ENCODE measurements at regions of chr9 and their contacts with region 1.

Region 1: GRCh38 chr9:6353851-6354686 is 25.9 kb downstream of the TPD52L3 start:
- DNase-seq: no peak
- H3K4me3 ChIP-seq: no peak overlapping the region
- H3K27ac ChIP-seq: no peak overlapping the region
- H3K4me1 ChIP-seq: peaks cover 0 to 4% (median 0%) of the 10 kb centered on the region in 4 donors
- H3K27me3 ChIP-seq: no peaks in the 10 kb centered on the region
- CTCF ChIP-seq: peak; percentile 60 to 69 (median 63)
- EP300 ChIP-seq: no peak
- POLR2A ChIP-seq: no peak

Region 2: GRCh38 chr9:6522263-6522662 is 168.2 kb after region 1 on chr9:
- intact Hi-C with region 1: no loop called
- DNase-seq: no peak
- H3K4me3 ChIP-seq: no peak overlapping the region
- H3K27ac ChIP-seq: no peak overlapping the region
- H3K4me1 ChIP-seq: no peaks in the 10 kb centered on the region
- H3K27me3 ChIP-seq: no peaks in the 10 kb centered on the region
- CTCF ChIP-seq: no peak
- EP300 ChIP-seq: no peak
- POLR2A ChIP-seq: no peak

Region 3: DNA sequence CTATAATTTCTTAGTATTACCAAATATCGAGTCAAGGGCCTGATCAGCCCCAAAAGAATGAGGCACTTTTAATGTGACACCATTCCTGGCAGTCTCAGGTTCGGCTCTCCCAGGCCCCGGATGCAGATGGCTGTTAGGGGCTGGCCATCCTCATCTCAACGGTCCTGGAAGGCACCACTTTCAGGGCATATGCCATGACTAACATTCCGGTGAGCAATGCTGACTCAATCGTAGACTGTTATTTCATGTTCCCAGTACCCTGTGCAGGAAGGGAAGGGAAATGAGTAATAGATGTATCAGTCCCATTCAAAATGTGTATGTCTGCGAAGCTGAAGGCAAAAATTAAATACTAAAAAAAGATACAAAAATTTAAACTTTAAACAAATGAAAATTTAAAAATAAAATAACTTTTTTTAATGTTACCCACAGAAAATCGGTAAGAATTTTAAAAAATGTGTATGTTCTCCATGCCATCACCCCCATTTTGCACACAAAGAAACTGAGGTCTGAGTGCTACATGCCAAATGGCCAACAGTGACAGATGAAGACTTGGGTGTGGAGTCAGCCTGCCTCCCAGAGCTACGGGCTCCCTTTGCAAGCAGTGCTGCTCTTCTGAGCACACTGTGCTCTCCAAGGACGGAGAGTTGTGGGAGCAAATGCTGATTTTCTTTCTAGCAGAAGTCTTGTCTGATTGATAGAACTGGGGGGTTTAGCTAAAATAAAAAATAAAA is 212.5 kb after region 1 on chr9:
- intact Hi-C with region 1: loop called (anchors 2 kb)
- DNase-seq: no peak
- H3K4me3 ChIP-seq: no peak overlapping the region
- H3K27ac ChIP-seq: no peak overlapping the region
- H3K4me1 ChIP-seq: no peaks in the 10 kb centered on the region
- H3K27me3 ChIP-seq: no peaks in the 10 kb centered on the region
- CTCF ChIP-seq: no peak
- EP300 ChIP-seq: no peak
- POLR2A ChIP-seq: no peak

Region 4: DNA sequence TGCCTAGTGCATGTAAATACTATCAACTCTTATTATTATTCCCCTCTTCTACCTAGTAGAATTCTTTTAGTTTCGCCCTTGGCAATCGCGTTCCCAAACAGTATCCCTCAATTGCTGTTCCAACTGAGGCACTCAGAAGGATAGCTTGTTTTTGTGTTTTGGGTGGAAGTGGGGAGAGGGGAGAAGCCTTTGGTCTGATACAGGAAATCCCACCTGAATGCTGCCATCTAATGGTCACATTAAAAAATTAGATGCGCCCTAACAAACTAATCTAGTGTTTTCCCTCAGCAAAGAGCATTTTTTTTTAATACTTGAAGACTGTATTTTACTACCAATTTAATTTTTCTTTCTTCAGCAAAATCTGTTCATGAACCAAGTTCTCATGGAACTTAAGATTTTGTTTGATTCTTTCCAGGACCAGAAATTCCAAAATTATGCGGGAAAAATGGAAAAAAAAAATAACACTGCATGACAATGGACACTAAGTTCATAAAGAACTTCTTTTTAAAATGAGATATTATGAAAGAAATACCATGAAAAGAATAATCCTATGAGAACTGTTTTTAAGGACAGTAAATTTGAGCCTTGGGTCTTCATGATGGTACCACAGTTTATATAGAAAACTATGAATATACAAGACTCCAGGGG is 313.7 kb after region 1 on chr9:
- intact Hi-C with region 1: loop called (anchors 5 kb)
- DNase-seq: no peak
- H3K4me3 ChIP-seq: no peak overlapping the region
- H3K27ac ChIP-seq: no peak overlapping the region
- H3K4me1 ChIP-seq: no peaks in the 10 kb centered on the region
- H3K27me3 ChIP-seq: no peaks in the 10 kb centered on the region
- CTCF ChIP-seq: peak in 3 of 4 experiments; percentile 12 to 45 (median 16)
- EP300 ChIP-seq: no peak
- POLR2A ChIP-seq: no peak